ENCODE measurements at regions of chr1 and their contacts with region 1.

Region 1: GRCh38 chr1:89847191-89847729 is 26.4 kb downstream of the LRRC8D start:
- DNase-seq: no peak
- ATAC-seq: no peak
- H3K4me3 ChIP-seq: no peak overlapping the region
- H3K27ac ChIP-seq: no peak overlapping the region
- H3K4me1 ChIP-seq: no peaks in the 10 kb centered on the region
- H3K27me3 ChIP-seq: no peaks in the 10 kb centered on the region
- CTCF ChIP-seq: no peak
- EP300 ChIP-seq: no peak
- POLR2A ChIP-seq: no peak
- RAD21 ChIP-seq: no peak

Region 2: GRCh38 chr1:89833183-89834082 is 13.8 kb before region 1 on chr1:
- CTCF ChIA-PET with region 1: no interaction called
- POLR2A ChIA-PET with region 1: interaction called, 21 read pairs
- in situ Hi-C with region 1: no loop called
- intact Hi-C with region 1: no loop called
- DNase-seq: no peak
- ATAC-seq: no peak; the same call in 2 of the 3 replicates
- H3K4me3 ChIP-seq: no peak overlapping the region
- H3K27ac ChIP-seq: peak overlapping the region; percentile 14; the same call in 1 of the 3 replicates
- H3K4me1 ChIP-seq: peaks cover 10 to 61% of the 10 kb centered on the region in 2 experiments
- H3K27me3 ChIP-seq: no peaks in the 10 kb centered on the region
- CTCF ChIP-seq: no peak
- EP300 ChIP-seq: no peak
- POLR2A ChIP-seq: no peak
- RAD21 ChIP-seq: no peak

Region 3: DNA sequence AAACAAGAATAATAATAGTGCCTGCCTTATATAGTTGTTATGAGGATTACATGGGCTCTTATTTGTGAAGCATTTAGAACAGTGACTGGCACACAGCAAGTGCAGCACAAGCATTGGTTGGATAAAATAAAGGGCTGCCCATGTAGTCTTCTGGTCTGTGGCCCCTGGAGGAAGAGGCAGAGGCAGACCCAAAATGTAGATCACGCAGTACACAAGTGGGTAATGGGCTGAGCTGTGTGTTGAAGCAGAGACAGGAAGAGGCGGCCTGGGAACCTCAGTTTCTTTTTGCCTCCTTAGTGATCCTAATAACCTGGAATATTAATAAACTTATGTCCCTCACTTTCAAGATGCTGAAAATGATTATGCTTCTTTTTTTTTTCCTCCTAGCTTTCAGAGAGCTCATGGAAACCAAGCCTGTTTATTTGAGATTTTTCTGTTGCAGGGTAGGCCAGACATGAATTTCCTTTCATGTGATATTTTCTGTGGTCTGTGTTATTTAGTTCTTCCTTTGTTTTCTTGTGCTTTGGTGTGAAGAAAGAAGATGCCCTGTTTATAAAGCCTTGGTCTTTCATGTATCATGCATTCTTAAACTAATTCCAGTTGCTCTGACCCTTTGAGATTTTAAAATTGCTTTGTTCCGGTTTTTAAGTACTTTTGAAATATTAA is 16.0 kb after region 1 on chr1:
- CTCF ChIA-PET with region 1: no interaction called
- POLR2A ChIA-PET with region 1: interaction called, 10 read pairs
- in situ Hi-C with region 1: no loop called
- intact Hi-C with region 1: no loop called
- DNase-seq: no peak
- ATAC-seq: no peak
- H3K4me3 ChIP-seq: no peak overlapping the region
- H3K27ac ChIP-seq: no peak overlapping the region
- H3K4me1 ChIP-seq: peaks cover 3 to 18% of the 10 kb centered on the region in 2 experiments; a peak in 3 of 5 replicates
- H3K27me3 ChIP-seq: no peaks in the 10 kb centered on the region
- CTCF ChIP-seq: no peak
- EP300 ChIP-seq: no peak
- POLR2A ChIP-seq: no peak
- RAD21 ChIP-seq: no peak

Region 4: GRCh38 chr1:90100566-90100965 is 253.3 kb after region 1 on chr1:
- CTCF ChIA-PET with region 1: no interaction called
- POLR2A ChIA-PET with region 1: no interaction called
- in situ Hi-C with region 1: no loop called
- intact Hi-C with region 1: no loop called
- DNase-seq: no peak
- ATAC-seq: no peak
- H3K4me3 ChIP-seq: no peak overlapping the region
- H3K27ac ChIP-seq: no peak overlapping the region
- H3K4me1 ChIP-seq: no peaks in the 10 kb centered on the region
- H3K27me3 ChIP-seq: peaks cover 4 to 11% of the 10 kb centered on the region in 2 experiments; a peak in 3 of 5 replicates
- CTCF ChIP-seq: no peak
- EP300 ChIP-seq: no peak
- POLR2A ChIP-seq: no peak
- RAD21 ChIP-seq: no peak

Measured in K562 (cell line).